ENCODE measurements at regions of chr17 and their contacts with region 1.

Region 1: DNA sequence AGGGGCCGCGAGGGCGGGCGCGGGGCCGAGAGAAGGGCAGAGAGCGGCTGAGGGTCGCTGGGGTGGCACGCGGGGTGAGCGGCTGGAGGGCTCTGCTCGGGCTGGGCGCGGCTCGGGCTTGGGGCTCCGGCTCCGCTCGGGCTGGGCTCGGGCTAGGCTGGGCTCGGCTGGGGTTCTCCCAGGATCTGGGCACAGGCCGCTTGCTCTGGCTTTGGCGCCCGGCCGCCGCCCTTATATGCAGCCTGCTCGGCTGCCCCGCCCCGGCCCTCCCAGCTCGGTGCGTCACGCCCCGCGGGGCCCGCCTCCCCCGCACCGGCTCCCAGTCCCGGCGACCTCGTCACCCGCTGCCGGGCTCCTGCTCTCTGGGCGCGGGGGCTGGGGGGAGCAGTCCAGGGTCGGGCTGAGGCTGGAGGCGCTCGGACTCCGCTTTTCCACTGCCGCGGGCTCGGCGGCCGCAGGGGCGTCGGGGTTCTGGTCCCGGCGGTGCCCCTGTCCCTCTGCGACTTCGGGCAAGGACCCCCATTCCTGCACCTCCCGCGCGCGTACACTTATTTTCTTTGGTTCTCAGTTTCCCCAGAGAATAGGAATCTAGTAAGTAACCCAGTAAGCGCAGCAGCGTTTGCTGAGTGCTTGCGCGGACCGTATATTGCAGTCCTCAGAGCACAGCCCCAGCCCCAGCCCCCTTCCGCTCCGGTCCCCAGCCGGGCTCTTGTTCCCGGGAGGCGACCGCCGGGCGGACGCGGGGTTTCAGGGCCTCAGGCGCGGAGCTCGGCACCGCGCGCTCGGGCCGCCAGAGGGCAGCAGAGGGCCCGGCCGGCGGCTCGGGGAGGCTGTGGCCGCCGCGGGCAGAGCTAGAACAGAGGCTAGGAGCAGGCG is at the start of gene RASD1:
- DNase-seq: peak; percentile 84
- ATAC-seq: peak; percentile 88
- H3K4me3 Mint-ChIP-seq: peak within 1 kb of the TSS; percentile 62
- H3K27ac Mint-ChIP-seq: no peak within 1 kb of the TSS
- H3K4me1 Mint-ChIP-seq: peaks cover 15% of the 10 kb centered on the region
- H3K27me3 Mint-ChIP-seq: peaks cover 8% of the 10 kb centered on the region
- CTCF ChIP-seq: peak; percentile 97
- total RNA-seq, gene RASD1: 0.54 to 0.74 TPM

Region 2: DNA sequence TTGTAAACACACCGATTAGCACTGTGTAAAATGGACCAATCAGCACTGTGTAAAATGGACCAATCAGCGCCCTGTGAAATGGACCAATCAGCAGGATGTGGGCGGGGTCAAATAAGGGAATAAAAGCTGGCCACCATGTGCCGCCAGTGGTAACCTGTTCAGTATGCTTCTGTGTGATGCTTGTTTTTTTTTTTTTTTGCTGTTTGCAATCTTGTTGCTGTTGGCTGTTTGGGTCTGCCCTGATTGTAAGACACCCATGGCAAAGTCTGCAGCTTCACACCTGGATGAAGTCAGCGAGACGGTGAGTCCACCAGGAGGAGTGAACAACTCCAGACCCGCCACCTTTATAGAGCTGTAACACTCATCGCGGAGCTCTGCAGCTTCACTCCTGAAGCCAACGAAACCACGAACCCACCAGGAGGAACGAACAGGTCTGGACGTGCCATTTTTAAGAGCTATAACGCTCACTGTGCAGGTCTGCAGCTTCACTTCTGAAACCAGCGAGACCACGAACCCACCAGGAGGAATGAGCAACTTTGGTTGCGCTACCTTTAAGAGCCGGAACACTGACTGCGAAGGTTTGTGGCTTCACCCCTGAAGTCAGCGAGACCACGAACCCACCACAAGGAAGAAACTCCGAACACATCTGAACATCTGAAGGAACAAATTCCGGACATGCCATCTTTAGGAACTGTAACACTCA is 104.6 kb before region 1 on chr17:
- CTCF ChIA-PET with region 1: interaction called, 10 read pairs
- POLR2A ChIA-PET with region 1: no interaction called
- intact Hi-C with region 1: no loop called
- DNase-seq: peak; percentile 86
- ATAC-seq: peak; percentile 79
- H3K4me3 Mint-ChIP-seq: peak overlapping the region; percentile 69
- H3K27ac Mint-ChIP-seq: peak overlapping the region; percentile 69
- H3K4me1 Mint-ChIP-seq: peaks cover 28% of the 10 kb centered on the region
- H3K27me3 Mint-ChIP-seq: peaks cover 5% of the 10 kb centered on the region
- CTCF ChIP-seq: no peak

Region 3: GRCh38 chr17:17511881-17512858 is 15.7 kb after region 1 on chr17:
- CTCF ChIA-PET with region 1: interaction called, 11 read pairs
- POLR2A ChIA-PET with region 1: no interaction called
- intact Hi-C with region 1: no loop called
- DNase-seq: no peak
- ATAC-seq: peak; percentile 31
- H3K4me3 Mint-ChIP-seq: no peak overlapping the region
- H3K27ac Mint-ChIP-seq: no peak overlapping the region
- H3K4me1 Mint-ChIP-seq: peaks cover 17% of the 10 kb centered on the region
- H3K27me3 Mint-ChIP-seq: no peaks in the 10 kb centered on the region
- CTCF ChIP-seq: no peak

Region 4: GRCh38 chr17:17591355-17592298 is 95.2 kb after region 1 on chr17 and contains the start of gene PEMT:
- CTCF ChIA-PET with region 1: interaction called, 22 read pairs
- POLR2A ChIA-PET with region 1: no interaction called
- intact Hi-C with region 1: no loop called
- DNase-seq: peak; percentile 98
- ATAC-seq: peak; percentile 94
- H3K4me3 Mint-ChIP-seq: peak within 1 kb of the TSS; percentile 99
- H3K27ac Mint-ChIP-seq: peak within 1 kb of the TSS; percentile 92
- H3K4me1 Mint-ChIP-seq: peaks cover 15% of the 10 kb centered on the region
- H3K27me3 Mint-ChIP-seq: no peaks in the 10 kb centered on the region
- CTCF ChIP-seq: no peak
- total RNA-seq, gene PEMT: 51.7 to 53.2 TPM

Region 5: DNA sequence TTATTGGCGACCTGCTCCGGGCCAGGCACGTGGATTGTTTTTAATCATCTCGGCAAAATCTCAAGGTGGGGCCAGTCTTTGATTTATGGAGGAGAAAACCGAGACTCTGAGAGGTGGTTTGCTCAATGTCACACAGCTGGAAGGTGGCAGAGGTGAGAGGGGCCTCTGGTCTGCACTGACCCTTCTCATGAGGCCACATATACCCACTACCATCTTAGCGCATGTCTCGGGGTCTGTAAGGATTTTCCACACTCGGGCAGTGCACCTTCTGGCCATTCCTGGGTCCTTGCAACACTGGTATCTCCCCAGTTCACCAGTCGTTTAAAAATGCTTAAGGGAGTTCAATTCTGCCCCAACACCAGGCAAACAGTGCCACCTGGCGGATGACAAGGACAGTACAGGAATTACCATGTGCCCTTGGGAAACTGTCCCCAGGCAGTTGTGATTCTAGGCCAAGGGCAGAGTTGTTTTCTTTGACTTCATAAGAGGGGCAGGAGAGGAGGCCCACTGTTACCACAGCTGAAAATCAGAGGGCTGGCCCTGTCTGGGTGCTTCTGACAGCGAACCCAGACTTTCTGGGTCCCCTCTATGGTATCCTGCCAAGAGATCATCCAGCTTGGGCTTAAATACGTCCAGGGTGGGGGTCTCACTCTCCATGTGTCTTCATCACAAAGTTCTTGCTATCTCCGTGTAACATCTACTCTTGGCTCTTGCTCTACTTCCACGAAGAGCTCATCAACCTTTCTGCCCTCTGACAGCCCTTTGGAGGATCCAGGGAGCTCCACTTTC is 145.4 kb after region 1 on chr17:
- CTCF ChIA-PET with region 1: interaction called, 100 read pairs
- POLR2A ChIA-PET with region 1: interaction called, 3 read pairs
- intact Hi-C with region 1: loop called (anchors 2 kb)
- DNase-seq: peak; percentile 85
- ATAC-seq: peak; percentile 97
- H3K4me3 Mint-ChIP-seq: no peak overlapping the region
- H3K27ac Mint-ChIP-seq: no peak overlapping the region
- H3K4me1 Mint-ChIP-seq: no peaks in the 10 kb centered on the region
- H3K27me3 Mint-ChIP-seq: no peaks in the 10 kb centered on the region
- CTCF ChIP-seq: peak; percentile 82

Measured in activated CD8-positive, alpha-beta T cell treated with anti-CD3 and anti-CD28 coated beads for 36 hours (primary cell).